HepG2 (cell line): ENCODE measurements at regions of chr15 and their contacts with region 1.

Region 1: DNA sequence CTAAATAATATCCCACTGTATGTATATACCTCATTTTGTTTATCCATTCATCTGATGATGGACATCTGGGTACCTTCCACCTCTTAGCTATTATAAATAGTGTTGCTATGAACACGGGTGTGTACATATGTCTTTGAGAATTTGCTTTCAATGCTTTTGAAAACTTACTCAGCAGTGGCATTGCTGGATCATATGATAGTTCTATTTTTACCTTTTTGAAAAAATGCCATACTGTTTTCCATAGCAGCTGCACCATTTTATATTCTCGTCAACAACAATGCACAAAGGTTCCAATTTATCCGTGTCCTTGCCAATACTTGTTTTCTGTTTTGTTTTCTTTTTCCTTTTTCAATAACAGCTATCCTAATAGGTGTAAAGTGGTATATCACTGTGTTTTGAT is 77.1 kb downstream of the PEAK1 start:
- DNase-seq: no peak
- ATAC-seq: no peak
- H3K4me3 ChIP-seq: no peak overlapping the region
- H3K27ac ChIP-seq: no peak overlapping the region
- H3K4me1 ChIP-seq: peaks cover 12% of the 10 kb centered on the region
- H3K27me3 ChIP-seq: no peaks in the 10 kb centered on the region
- CTCF ChIP-seq: no peak
- EP300 ChIP-seq: no peak
- POLR2A ChIP-seq: no peak
- RAD21 ChIP-seq: no peak

Region 2: DNA sequence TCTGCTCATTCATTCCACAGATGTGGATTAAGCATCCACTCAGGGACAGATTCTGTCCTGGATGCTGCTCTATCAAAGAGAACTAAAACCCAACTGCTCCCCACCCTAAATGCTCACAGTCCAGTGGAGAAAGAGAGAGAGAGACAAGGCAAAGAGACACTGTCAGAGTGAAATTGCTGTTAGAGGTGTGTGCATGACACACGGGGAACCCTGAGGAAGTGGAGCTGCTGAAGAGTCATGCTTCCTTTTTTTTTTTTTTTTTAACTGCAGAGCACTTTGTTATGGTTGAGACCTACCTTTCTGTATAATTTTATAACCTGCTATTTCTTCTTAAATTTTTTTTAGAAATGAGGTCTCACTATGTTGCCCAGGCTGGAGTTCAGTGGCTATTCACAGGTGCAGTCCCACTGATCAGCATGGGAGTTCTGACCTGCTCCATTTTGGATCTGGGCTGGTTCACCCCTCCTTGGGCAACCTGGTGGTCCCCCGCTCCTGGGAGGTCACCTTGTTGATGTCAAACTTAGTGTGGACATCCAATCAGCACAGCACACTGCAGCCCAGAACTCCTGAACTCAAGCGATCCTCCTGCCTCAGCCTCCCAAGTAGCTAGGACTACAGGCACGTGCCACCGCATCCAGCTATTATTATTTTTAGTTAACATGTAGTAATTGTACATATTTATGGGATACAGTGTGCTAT is 366.1 kb before region 1 on chr15:
- CTCF ChIA-PET with region 1: no interaction called
- POLR2A ChIA-PET with region 1: no interaction called
- in situ Hi-C with region 1: no loop called
- intact Hi-C with region 1: loop called (anchors 5 kb)
- DNase-seq: no peak
- ATAC-seq: no peak
- H3K4me3 ChIP-seq: no peak overlapping the region
- H3K27ac ChIP-seq: no peak overlapping the region
- H3K4me1 ChIP-seq: peaks cover 3% of the 10 kb centered on the region; the same call in 1 of the 2 replicates
- H3K27me3 ChIP-seq: peaks cover 2 to 30% of the 10 kb centered on the region in 2 experiments; a peak in 4 of 5 replicates
- CTCF ChIP-seq: no peak
- EP300 ChIP-seq: no peak
- POLR2A ChIP-seq: no peak
- RAD21 ChIP-seq: no peak

Region 3: DNA sequence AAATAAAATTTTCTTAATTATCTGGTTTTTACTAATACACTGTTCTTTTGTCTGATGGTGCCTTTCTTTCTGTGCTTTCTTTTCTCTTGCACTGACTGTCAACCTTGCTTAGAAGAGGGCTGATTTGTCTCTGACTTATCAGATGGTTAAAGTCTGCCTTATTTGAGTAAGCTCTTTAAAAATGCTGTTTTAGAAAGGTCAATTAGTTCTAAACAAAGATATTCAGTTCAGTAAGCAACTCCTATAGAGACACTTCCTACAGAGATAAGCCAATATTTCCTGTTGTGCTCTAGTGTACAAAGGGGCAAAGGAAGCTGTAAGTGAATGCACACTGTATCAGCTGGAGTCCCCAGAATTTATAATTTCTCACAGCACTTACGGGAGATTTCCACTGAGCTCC is 118.5 kb before region 1 on chr15:
- CTCF ChIA-PET with region 1: no interaction called
- POLR2A ChIA-PET with region 1: no interaction called
- in situ Hi-C with region 1: no loop called
- intact Hi-C with region 1: no loop called
- DNase-seq: peak; percentile 53
- ATAC-seq: peak; percentile 75
- H3K4me3 ChIP-seq: no peak overlapping the region; a peak in 1 of 6 replicates
- H3K27ac ChIP-seq: peak overlapping the region; percentile 4
- H3K4me1 ChIP-seq: peaks cover 45% of the 10 kb centered on the region
- H3K27me3 ChIP-seq: no peaks in the 10 kb centered on the region
- CTCF ChIP-seq: no peak
- EP300 ChIP-seq: no peak
- POLR2A ChIP-seq: no peak
- RAD21 ChIP-seq: no peak